ENCODE measurements at regions of chr11 and their contacts with region 1.

Region 1: DNA sequence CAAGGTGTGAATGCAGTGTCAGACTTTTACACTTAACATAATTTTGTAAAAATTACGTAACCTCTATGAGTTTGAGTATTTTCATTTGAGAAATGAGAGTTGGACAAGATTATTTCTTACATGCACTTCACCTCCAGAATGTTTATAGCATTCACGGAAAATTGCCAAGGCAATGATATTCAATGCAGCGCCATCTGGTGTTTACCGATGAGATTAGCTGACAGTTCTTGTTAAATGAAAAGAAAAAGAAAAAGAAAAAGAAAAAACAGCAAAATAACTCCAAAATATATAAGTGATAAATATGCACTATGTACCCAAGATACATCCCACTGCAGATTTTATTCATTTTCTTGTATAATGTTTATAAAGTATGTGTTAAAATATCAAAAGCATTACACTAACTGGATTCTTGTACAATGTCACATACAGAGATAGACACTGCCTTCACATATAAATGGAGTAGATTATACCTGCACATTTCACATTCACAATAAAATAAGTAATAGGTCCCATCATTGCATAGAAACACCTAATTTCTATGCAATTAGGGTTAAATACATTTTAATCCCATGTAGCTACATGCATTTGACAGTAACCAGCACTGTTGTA is 976.3 kb upstream of the FAT3 start:
- DNase-seq: peak; percentile 56
- H3K4me3 ChIP-seq: no peak overlapping the region
- H3K27ac ChIP-seq: no peak overlapping the region
- H3K4me1 ChIP-seq: no peaks in the 10 kb centered on the region
- H3K27me3 ChIP-seq: no peaks in the 10 kb centered on the region
- CTCF ChIP-seq: peak; percentile 31 to 38
- POLR2A ChIP-seq: no peak

Region 2: DNA sequence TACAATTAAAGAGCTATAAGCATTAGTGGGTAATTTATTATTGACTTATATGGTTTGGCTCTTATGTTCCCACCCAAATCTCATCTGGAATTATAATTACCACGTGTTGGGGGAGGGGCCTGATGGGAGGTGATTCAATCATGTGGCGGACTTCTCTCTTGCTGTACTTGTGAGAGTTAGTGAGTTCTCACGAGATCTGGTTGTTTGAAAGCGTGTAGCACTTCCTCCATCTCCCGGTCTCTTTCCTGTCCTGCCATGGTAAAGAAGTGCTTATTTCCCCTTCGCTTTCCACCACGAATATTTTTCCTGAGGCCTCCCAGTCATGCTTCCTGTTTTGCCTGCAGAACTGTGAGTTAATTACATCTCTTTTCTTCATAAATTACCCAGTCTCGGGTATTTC is 997.3 kb before region 1 on chr11:
- CTCF ChIA-PET with region 1: interaction called, 6 read pairs
- POLR2A ChIA-PET with region 1: no interaction called
- dilution Hi-C with region 1: no loop called
- intact Hi-C with region 1: loop called (anchors 5 kb)
- DNase-seq: peak; percentile 65
- H3K4me3 ChIP-seq: no peak overlapping the region
- H3K27ac ChIP-seq: no peak overlapping the region
- H3K4me1 ChIP-seq: no peaks in the 10 kb centered on the region
- H3K27me3 ChIP-seq: no peaks in the 10 kb centered on the region
- CTCF ChIP-seq: no peak
- POLR2A ChIP-seq: no peak

Region 3: DNA sequence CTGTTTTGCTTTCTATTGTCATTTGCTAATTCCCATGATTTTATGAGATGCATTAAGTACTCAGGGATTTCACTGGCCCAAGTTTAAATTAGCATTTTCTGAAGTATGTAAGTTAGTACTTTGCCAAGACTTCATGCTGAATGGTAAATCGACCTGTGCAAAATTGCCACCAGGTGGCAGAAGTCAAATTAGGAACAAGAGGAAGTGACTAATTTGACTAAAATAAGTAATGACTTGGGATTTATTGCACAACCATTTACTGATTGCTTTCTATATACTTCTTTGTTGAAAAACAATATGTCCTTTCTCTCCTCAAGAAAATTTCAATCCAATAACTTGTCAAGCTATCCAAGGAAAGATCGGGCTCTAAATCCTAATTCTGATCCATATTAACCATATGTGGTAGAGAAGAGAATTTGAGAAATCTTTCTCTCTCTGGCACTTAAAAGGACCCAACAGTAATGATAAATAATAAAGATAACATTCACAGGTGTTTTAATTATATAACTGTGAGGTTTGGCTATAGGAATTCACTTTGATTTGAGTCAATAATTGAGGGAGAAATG is 771.8 kb before region 1 on chr11:
- CTCF ChIA-PET with region 1: no interaction called
- POLR2A ChIA-PET with region 1: no interaction called
- dilution Hi-C with region 1: no loop called
- intact Hi-C with region 1: loop called (anchors 1 kb)
- DNase-seq: peak; percentile 56
- H3K4me3 ChIP-seq: no peak overlapping the region
- H3K27ac ChIP-seq: no peak overlapping the region
- H3K4me1 ChIP-seq: no peaks in the 10 kb centered on the region
- H3K27me3 ChIP-seq: no peaks in the 10 kb centered on the region
- CTCF ChIP-seq: peak; percentile 32 to 33
- POLR2A ChIP-seq: no peak

Region 4: GRCh38 chr11:90639461-90639993 is 608.8 kb before region 1 on chr11:
- CTCF ChIA-PET with region 1: interaction called, 27 read pairs
- POLR2A ChIA-PET with region 1: no interaction called
- dilution Hi-C with region 1: no loop called
- intact Hi-C with region 1: loop called (anchors 2 kb)
- DNase-seq: peak; percentile 9
- H3K4me3 ChIP-seq: no peak overlapping the region
- H3K27ac ChIP-seq: no peak overlapping the region
- H3K4me1 ChIP-seq: no peaks in the 10 kb centered on the region
- H3K27me3 ChIP-seq: no peaks in the 10 kb centered on the region
- CTCF ChIP-seq: peak in 1 of 2 donors; percentile 16
- POLR2A ChIP-seq: no peak

Region 5: DNA sequence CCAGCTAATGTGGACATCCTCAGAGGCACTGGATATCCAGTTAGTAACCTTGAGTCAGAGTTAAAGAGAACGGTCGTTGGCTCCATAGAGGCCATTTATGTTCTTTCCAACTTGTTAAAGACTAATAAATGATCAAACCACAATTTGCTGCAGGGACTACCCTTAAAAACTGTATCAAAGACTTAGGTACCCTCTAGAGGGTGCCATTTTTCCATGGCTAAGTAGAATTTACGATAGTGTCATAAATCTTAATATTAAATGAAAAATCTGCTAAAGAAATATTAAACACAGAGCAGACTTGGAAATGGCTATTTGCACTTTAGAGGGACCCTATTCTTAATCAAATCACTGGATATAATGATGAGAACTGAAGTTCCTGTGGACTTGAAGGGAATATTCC is 340.2 kb before region 1 on chr11:
- CTCF ChIA-PET with region 1: interaction called, 50 read pairs
- POLR2A ChIA-PET with region 1: no interaction called
- dilution Hi-C with region 1: no loop called
- intact Hi-C with region 1: loop called (anchors 5 kb)
- DNase-seq: peak; percentile 5
- H3K4me3 ChIP-seq: no peak overlapping the region
- H3K27ac ChIP-seq: no peak overlapping the region
- H3K4me1 ChIP-seq: no peaks in the 10 kb centered on the region
- H3K27me3 ChIP-seq: no peaks in the 10 kb centered on the region
- CTCF ChIP-seq: no peak
- POLR2A ChIP-seq: no peak

Region 6: GRCh38 chr11:91513734-91514133 is 265.4 kb after region 1 on chr11:
- CTCF ChIA-PET with region 1: no interaction called
- POLR2A ChIA-PET with region 1: no interaction called
- dilution Hi-C with region 1: no loop called
- intact Hi-C with region 1: no loop called
- DNase-seq: no peak
- H3K4me3 ChIP-seq: no peak overlapping the region
- H3K27ac ChIP-seq: no peak overlapping the region
- H3K4me1 ChIP-seq: no peaks in the 10 kb centered on the region
- H3K27me3 ChIP-seq: no peaks in the 10 kb centered on the region
- CTCF ChIP-seq: no peak
- POLR2A ChIP-seq: no peak

Measured in endothelial cell of umbilical vein (primary cell).